Activated CD8-positive, alpha-beta T cell treated with anti-CD3 and anti-CD28 coated beads for 36 hours (primary cell): ENCODE measurements at regions of chr3 and their contacts with region 1.

Region 1: GRCh38 chr3:187112934-187113793 is 26.1 kb downstream of the RPL39L start:
- DNase-seq: no peak
- ATAC-seq: peak; percentile 66
- H3K4me3 Mint-ChIP-seq: no peak overlapping the region
- H3K27ac Mint-ChIP-seq: no peak overlapping the region
- H3K4me1 Mint-ChIP-seq: peaks cover 7% of the 10 kb centered on the region
- H3K27me3 Mint-ChIP-seq: no peaks in the 10 kb centered on the region
- CTCF ChIP-seq: peak; percentile 80

Region 2: DNA sequence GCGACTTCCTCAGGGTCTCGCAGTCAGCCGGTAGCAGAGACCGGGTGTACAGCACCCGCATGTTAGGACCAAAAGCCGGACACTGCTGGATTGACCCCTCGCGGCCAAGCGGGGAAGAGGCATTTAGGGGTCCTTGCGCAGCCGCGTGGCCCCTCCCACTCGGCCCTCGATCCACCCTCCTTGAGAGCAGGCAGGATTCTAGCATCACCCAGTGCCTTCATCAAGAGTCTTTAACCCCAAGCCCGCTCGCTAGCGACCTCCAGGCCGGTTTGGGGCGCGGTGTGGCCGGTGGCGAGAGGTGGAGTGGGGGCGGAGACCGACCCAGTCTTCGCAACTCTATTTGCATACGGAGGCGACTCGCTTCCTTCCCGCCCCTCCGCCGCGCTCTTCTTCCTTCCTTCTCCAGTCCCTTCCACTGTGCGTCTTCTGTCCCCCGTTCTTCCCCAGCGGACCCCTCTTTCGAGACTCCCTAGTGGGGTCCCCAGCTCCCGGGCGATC is 183.0 kb before region 1 on chr3 and contains the start of gene ST6GAL1:
- CTCF ChIA-PET with region 1: no interaction called
- POLR2A ChIA-PET with region 1: no interaction called
- intact Hi-C with region 1: no loop called
- DNase-seq: peak; percentile 79
- ATAC-seq: peak; percentile 60
- H3K4me3 Mint-ChIP-seq: peak within 1 kb of the TSS; percentile 97
- H3K27ac Mint-ChIP-seq: peak within 1 kb of the TSS; percentile 93
- H3K4me1 Mint-ChIP-seq: peaks cover 24% of the 10 kb centered on the region
- H3K27me3 Mint-ChIP-seq: no peaks in the 10 kb centered on the region
- CTCF ChIP-seq: no peak
- total RNA-seq, gene ST6GAL1: 84.6 to 99.2 TPM

Region 3: GRCh38 chr3:187016639-187017345 is 96.4 kb before region 1 on chr3:
- CTCF ChIA-PET with region 1: no interaction called
- POLR2A ChIA-PET with region 1: no interaction called
- intact Hi-C with region 1: no loop called
- DNase-seq: no peak
- ATAC-seq: no peak
- H3K4me3 Mint-ChIP-seq: no peak overlapping the region
- H3K27ac Mint-ChIP-seq: peak overlapping the region; percentile 64
- H3K4me1 Mint-ChIP-seq: peaks cover 55% of the 10 kb centered on the region
- H3K27me3 Mint-ChIP-seq: no peaks in the 10 kb centered on the region
- CTCF ChIP-seq: no peak

Region 4: GRCh38 chr3:187101184-187102072 is 11.7 kb before region 1 on chr3:
- CTCF ChIA-PET with region 1: interaction called, 63 read pairs
- POLR2A ChIA-PET with region 1: no interaction called
- intact Hi-C with region 1: no loop called
- DNase-seq: peak; percentile 66
- ATAC-seq: peak; percentile 73
- H3K4me3 Mint-ChIP-seq: no peak overlapping the region
- H3K27ac Mint-ChIP-seq: peak overlapping the region; percentile 26
- H3K4me1 Mint-ChIP-seq: peaks cover 29% of the 10 kb centered on the region
- H3K27me3 Mint-ChIP-seq: no peaks in the 10 kb centered on the region
- CTCF ChIP-seq: no peak

Region 5: DNA sequence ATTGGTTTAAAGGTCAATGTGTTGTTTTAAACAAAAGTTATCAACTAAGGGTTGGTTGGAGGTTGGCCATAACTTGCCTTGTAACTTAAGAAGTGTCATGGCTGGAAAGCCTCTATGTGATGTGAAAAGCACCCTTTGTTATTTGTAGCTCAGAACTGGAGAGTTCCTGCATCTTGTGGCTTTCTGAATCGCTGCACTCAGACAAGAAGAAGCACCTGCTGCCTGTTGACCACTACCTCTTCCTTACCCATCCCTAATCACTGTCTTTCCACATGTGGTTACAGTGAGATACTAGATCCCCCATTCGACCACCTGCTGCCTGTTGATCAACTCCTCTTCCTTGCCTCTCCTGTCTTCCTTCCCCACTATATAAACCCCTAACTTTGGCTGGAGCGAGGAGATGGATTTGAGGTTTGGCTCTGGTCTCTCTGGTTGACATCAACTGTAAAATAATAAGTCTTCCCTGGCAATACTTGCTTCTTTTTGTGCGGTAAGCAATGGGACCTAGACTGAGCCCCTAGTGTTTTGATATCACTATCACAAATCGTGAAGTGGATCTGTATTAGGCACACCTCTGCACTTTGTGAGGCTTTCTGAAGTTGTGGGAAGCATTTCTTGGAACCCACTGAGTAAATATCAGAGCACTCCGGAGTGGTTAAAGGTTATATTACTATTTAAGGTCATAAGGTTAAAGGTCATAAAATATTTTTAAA is 12.3 kb after region 1 on chr3:
- CTCF ChIA-PET with region 1: interaction called, 38 read pairs
- POLR2A ChIA-PET with region 1: interaction called, 3 read pairs
- intact Hi-C with region 1: no loop called
- DNase-seq: no peak
- ATAC-seq: no peak
- H3K4me3 Mint-ChIP-seq: no peak overlapping the region
- H3K27ac Mint-ChIP-seq: no peak overlapping the region
- H3K4me1 Mint-ChIP-seq: peaks cover 21% of the 10 kb centered on the region
- H3K27me3 Mint-ChIP-seq: no peaks in the 10 kb centered on the region
- CTCF ChIP-seq: no peak

Region 6: DNA sequence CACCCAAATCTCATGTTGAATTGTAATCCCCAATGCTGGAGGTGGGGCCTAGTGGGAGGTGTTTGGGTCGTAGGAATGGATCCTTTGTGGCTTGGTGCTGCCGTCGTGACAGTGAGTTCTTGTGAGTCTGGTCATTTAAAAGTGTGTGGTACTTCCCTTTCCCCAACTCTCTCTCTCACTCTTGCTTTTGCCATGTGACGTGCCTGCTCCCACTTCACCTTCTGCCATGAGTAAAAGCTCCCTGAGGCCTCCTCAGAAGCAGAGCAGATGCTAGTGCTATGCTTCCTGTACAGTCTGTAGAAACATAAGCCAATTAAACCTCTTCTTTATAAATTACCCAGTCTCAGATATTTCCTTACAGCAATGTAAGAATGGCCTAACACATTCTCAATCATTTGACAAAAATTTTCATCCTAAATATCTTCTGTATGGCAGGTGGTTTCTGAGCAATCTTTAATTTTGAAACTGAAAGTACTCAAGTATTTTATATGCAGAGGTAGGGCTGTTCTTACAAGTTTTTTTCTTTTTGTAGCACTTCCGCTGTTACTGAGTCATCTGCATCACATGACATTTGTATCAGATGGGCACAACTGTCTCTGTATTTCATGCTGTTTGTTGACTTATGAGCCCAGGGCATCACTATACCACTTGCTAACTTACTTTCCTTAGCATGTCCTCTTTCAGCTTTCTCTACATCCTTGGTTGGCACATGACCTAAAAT is 17.3 kb after region 1 on chr3:
- CTCF ChIA-PET with region 1: interaction called, 38 read pairs
- POLR2A ChIA-PET with region 1: no interaction called
- intact Hi-C with region 1: no loop called
- DNase-seq: peak; percentile 58
- ATAC-seq: peak; percentile 92
- H3K4me3 Mint-ChIP-seq: peak overlapping the region; percentile 49
- H3K27ac Mint-ChIP-seq: peak overlapping the region; percentile 97
- H3K4me1 Mint-ChIP-seq: peaks cover 35% of the 10 kb centered on the region
- H3K27me3 Mint-ChIP-seq: no peaks in the 10 kb centered on the region
- CTCF ChIP-seq: no peak

Region 7: GRCh38 chr3:187139126-187139894 is 26.1 kb after region 1 on chr3 and contains the start of gene RPL39L:
- CTCF ChIA-PET with region 1: interaction called, 34 read pairs
- POLR2A ChIA-PET with region 1: interaction called, 8 read pairs
- intact Hi-C with region 1: no loop called
- DNase-seq: peak; percentile 96
- ATAC-seq: peak; percentile 96
- H3K4me3 Mint-ChIP-seq: peak within 1 kb of the TSS; percentile 83
- H3K27ac Mint-ChIP-seq: peak within 1 kb of the TSS; percentile 97
- H3K4me1 Mint-ChIP-seq: peaks cover 19% of the 10 kb centered on the region
- H3K27me3 Mint-ChIP-seq: no peaks in the 10 kb centered on the region
- CTCF ChIP-seq: peak; percentile 97
- total RNA-seq, gene RPL39L: 12.1 to 16.2 TPM

Region 8: GRCh38 chr3:187164885-187165543 is 51.9 kb after region 1 on chr3:
- CTCF ChIA-PET with region 1: interaction called, 166 read pairs
- POLR2A ChIA-PET with region 1: interaction called, 3 read pairs
- intact Hi-C with region 1: loop called (anchors 1 kb)
- DNase-seq: peak; percentile 52
- ATAC-seq: peak; percentile 80
- H3K4me3 Mint-ChIP-seq: no peak overlapping the region
- H3K27ac Mint-ChIP-seq: no peak overlapping the region
- H3K4me1 Mint-ChIP-seq: peaks cover under 1% of the 10 kb centered on the region
- H3K27me3 Mint-ChIP-seq: no peaks in the 10 kb centered on the region
- CTCF ChIP-seq: peak; percentile 88

Region 9: GRCh38 chr3:187223799-187224198 is 110.6 kb after region 1 on chr3:
- CTCF ChIA-PET with region 1: no interaction called
- POLR2A ChIA-PET with region 1: no interaction called
- intact Hi-C with region 1: no loop called
- DNase-seq: no peak
- ATAC-seq: no peak
- H3K4me3 Mint-ChIP-seq: no peak overlapping the region
- H3K27ac Mint-ChIP-seq: no peak overlapping the region
- H3K4me1 Mint-ChIP-seq: no peaks in the 10 kb centered on the region
- H3K27me3 Mint-ChIP-seq: peaks cover 3% of the 10 kb centered on the region
- CTCF ChIP-seq: no peak